Heart left ventricle (tissue), 16 donors: ENCODE measurements at regions of chr2 and their contacts with region 1.

Region 1: DNA sequence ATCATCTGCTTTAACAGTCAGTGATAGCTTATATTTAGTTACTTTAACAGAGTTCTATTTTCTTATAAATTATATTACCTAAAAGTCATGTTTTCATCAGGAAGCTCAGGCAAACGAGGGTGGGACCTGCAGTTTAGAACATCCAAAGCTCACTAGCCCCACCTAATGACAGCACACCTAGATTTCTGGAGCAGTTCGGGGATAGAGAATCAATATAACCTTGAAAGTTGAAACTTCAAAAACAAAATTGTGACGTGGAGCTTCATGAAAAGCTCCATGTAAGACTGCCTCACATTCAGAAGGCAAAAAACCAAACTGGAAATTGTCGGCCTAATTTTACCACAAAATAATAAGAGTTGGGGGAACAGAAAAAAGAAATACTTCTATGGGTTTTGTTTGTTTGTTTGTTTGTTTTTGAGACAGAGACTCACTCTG is 185.9 kb upstream of the CCDC150 start:
- DNase-seq: peak in 3 of 5 donors; percentile 33 to 43 (median 42)
- ATAC-seq: peak; percentile 51 to 69 (median 58)
- H3K4me3 ChIP-seq: no peak overlapping the region
- H3K27ac ChIP-seq: peak overlapping the region in 1 of 12 donors; percentile 23
- H3K4me1 ChIP-seq: peaks cover 0 to 15% (median 0%) of the 10 kb centered on the region in 12 donors
- H3K27me3 ChIP-seq: peaks cover 0 to 8% (median 0%) of the 10 kb centered on the region in 9 donors
- CTCF ChIP-seq: peak; percentile 37 to 81 (median 68)
- POLR2A ChIP-seq: no peak

Region 2: DNA sequence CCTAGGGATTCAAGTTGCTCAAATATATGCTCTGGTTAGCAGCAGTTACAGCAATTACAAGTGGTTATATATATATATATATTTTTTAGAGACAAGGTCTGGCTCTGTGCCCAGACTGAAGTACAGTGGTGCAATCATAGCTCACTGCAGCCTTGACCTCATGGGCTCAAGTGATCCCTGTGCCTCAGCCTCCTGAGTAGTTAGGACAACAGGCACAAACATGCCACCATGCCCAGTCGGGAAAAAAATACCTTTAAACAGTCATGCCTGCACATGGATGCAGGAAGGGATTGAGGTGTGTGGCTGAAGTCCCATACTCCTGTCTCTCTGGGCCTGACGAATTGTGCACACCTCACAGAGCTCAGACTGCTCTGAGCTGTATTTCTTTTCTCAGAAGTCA is 365.4 kb before region 1 on chr2:
- intact Hi-C with region 1: loop called in 3 of 10 experiments (anchors 5 to 10 kb)
- DNase-seq: peak in 1 of 5 donors; percentile 32
- ATAC-seq: peak in 1 of 4 donors; percentile 26
- H3K4me3 ChIP-seq: no peak overlapping the region
- H3K27ac ChIP-seq: no peak overlapping the region
- H3K4me1 ChIP-seq: peaks cover 0 to 2% (median 0%) of the 10 kb centered on the region in 12 donors
- H3K27me3 ChIP-seq: no peaks in the 10 kb centered on the region
- CTCF ChIP-seq: no peak
- POLR2A ChIP-seq: no peak

Region 3: DNA sequence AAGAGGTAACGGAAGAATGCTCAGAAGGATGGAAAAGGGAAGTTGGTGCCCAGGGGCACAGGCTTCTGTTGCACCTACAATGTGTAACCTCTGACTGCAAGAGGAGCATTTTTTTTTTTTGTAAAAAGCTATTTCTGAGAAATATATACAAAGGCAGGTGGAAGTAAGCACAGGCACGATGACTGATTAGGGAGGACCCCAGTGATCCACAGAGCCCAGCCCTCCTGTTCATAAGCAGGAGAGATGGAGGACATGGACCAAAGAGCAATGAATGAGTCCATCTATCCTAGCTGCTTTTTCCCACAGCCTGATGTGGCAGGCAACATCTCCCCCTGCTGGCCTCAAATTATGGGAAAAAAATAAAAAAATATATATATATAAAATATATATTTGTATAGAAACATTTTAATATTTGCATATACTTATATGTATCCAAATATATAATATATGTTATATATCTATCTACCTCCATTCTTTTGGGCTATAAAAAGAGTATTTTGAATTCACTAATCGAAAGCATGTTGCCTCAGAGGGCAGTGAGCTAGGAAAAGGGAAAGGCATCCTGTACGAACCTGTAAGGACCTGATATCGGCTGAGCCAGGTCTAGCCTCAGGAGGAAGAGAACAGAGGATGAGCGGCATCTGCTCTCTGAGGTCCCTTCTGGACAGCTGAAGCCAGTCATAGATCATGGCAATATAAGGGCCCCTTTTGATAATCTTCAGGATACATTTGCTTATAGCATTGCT is 116.2 kb before region 1 on chr2:
- intact Hi-C with region 1: loop called in 2 of 10 experiments (anchors 10 kb)
- DNase-seq: no peak
- ATAC-seq: peak in 1 of 4 donors; percentile 42
- H3K4me3 ChIP-seq: no peak overlapping the region
- H3K27ac ChIP-seq: no peak overlapping the region
- H3K4me1 ChIP-seq: peaks cover 0 to 50% (median 9%) of the 10 kb centered on the region in 12 donors
- H3K27me3 ChIP-seq: no peaks in the 10 kb centered on the region
- CTCF ChIP-seq: peak; percentile 17 to 62 (median 46)
- POLR2A ChIP-seq: no peak

Region 4: GRCh38 chr2:196361606-196362326 is 91.9 kb before region 1 on chr2:
- intact Hi-C with region 1: loop called in 1 of 10 experiments (anchors 5 kb)
- DNase-seq: peak in 3 of 5 donors; percentile 33 to 44 (median 33)
- ATAC-seq: peak; percentile 22 to 78 (median 76)
- H3K4me3 ChIP-seq: peak overlapping the region; percentile 6 to 58 (median 48)
- H3K27ac ChIP-seq: peak overlapping the region; percentile 19 to 76 (median 54)
- H3K4me1 ChIP-seq: peaks cover 0 to 34% (median 11%) of the 10 kb centered on the region in 12 donors
- H3K27me3 ChIP-seq: no peaks in the 10 kb centered on the region
- CTCF ChIP-seq: no peak
- POLR2A ChIP-seq: peak in 1 of 2 donors; percentile 28